ENCODE measurements at regions of chr1 and their contacts with region 1.

Region 1: GRCh38 chr1:159239551-159240220 is 35.0 kb downstream of the ACKR1 start:
- H3K4me3 Mint-ChIP-seq: no peak overlapping the region
- H3K27ac Mint-ChIP-seq: no peak overlapping the region
- H3K4me1 Mint-ChIP-seq: peaks cover 26% of the 10 kb centered on the region
- H3K27me3 Mint-ChIP-seq: peaks cover 5% of the 10 kb centered on the region

Region 2: GRCh38 chr1:159307346-159308020 is 67.8 kb after region 1 on chr1:
- intact Hi-C with region 1: loop called (anchors 10 kb)
- H3K4me3 Mint-ChIP-seq: peak overlapping the region; percentile 58
- H3K27ac Mint-ChIP-seq: no peak overlapping the region
- H3K4me1 Mint-ChIP-seq: peaks cover 41% of the 10 kb centered on the region
- H3K27me3 Mint-ChIP-seq: peaks cover 5% of the 10 kb centered on the region

Region 3: GRCh38 chr1:159341736-159342135 is 102.0 kb after region 1 on chr1:
- intact Hi-C with region 1: loop called (anchors 10 kb)
- H3K4me3 Mint-ChIP-seq: no peak overlapping the region
- H3K27ac Mint-ChIP-seq: no peak overlapping the region
- H3K4me1 Mint-ChIP-seq: peaks cover 18% of the 10 kb centered on the region
- H3K27me3 Mint-ChIP-seq: no peaks in the 10 kb centered on the region

Measured in dendritic cell treated with granulocyte-macrophage colony-stimulating factor and Interleukin-4, amounts not matched to agents 40 ng/mL and 50 ng/mL, for 4 days (primary cell).